ENCODE measurements at regions of chr5 and their contacts with region 1.

Region 1: DNA sequence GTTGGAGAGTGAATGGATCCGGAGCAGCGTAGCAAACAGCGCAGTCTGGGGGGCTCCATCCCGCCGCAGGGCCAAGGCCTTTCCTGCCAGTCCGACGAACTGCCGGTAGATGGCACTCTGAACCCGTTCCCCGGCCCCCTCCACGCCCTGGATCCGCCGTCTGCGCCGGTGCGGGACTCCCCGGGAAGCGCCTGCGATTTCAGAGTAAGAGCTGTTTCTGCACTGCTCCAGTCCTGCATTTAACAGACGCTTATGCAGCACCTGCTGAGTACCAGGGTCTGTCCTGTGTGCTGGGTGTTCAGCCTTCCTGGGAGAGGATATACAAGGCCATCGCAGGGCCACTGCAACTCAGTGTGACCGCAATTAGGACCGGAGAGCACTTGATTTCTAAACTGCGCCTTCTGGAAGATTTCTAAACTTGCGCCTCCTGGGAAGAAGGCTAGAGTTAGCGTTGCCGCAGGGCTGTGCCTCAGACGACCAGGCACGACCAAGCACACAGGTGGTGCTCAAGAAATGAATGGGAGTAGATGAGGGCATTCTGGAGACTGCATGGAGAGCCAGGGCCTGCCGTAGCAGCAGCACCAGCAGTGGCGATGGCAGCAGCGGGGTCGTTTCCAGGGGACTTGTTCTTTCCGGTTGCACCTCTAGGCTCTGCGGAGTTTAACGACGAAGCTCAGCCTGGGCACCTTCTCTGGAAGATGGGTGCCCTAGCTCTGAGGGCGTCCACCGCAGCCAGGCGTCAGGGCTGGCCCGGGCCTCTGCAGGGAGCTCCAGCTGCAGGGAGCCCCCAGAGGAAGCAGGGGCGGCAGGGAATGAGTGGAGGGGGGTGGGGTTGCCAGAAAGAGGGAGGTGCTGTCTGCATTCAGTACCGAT is 14.3 kb upstream of the TIFAB start:
- DNase-seq: peak; percentile 94
- H3K4me3 Mint-ChIP-seq: peak overlapping the region; percentile 61
- H3K27ac Mint-ChIP-seq: no peak overlapping the region
- H3K4me1 Mint-ChIP-seq: peaks cover 7% of the 10 kb centered on the region
- H3K27me3 Mint-ChIP-seq: peaks cover 38% of the 10 kb centered on the region

Region 2: DNA sequence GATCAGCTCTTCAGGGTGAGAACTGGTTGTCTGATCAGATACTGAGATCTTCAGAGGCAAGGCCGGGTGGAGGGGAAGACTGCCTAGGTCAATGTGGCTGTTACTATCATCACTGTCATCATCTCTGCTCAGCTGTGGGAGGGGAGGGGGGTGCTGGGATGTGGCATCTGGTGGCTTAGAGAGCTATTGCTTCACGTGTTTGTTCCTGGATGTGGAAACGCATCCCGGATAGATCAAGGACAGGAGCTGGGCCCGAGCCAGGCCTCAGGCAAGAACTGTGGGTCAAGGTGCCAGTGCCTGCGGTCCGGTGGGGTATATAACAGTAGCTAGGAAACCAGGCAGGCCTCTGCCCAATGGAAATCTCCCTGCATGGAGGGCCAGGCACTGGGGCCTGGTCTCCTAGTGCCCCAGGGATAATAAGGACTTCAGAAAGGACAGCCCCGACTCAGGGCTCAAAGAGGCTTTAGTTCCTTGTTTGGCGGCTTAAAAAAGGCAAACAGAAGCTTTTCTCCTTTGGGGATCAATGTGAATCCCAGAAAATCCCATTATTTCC is 16.0 kb after region 1 on chr5:
- intact Hi-C with region 1: no loop called
- DNase-seq: no peak
- H3K4me3 Mint-ChIP-seq: no peak overlapping the region
- H3K27ac Mint-ChIP-seq: no peak overlapping the region
- H3K4me1 Mint-ChIP-seq: no peaks in the 10 kb centered on the region
- H3K27me3 Mint-ChIP-seq: peaks cover 30% of the 10 kb centered on the region

Region 3: DNA sequence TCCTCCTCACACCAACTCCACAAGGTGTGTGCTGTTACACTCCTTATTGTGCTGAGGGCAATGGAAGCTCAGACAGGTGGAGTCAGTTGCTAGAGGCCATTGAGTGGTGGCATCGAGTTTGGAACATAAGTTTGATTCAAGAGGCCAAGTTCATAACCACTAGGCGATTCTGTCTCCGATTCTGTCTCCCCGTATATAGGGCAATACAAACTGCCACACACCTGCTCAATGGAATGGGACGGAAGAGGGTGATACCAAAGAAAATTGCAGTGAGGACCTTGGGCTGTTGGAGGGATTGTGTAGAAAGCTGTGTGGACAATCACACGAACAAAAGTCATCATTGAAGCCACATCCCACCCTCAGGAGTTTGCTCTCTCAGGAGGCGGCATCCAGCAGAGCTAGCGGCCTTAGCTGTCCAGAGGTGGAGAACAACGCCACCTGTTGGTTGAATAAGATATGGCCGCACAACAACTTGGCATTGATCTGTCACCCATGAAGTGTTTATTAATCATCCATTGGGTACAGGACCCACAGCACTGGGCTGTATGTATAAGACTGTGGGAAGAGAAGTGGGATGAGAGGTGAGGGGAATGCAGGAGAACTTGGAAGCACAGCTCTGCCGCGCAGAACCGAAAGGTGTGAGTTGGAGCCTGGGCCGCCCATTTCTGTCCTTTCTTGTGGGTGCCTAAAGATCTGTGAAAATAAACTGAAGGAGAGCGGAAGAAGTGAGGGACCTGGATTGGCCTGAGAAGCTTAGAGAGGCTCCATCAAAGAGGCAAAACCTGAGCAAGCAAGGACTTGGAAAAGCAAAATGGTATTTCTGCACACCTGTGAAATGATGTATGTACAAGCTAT is 85.4 kb after region 1 on chr5:
- intact Hi-C with region 1: loop called (anchors 1 kb)
- DNase-seq: peak; percentile 88
- H3K4me3 Mint-ChIP-seq: no peak overlapping the region
- H3K27ac Mint-ChIP-seq: no peak overlapping the region
- H3K4me1 Mint-ChIP-seq: no peaks in the 10 kb centered on the region
- H3K27me3 Mint-ChIP-seq: peaks cover 57% of the 10 kb centered on the region

Region 4: GRCh38 chr5:135565725-135566421 is 99.5 kb after region 1 on chr5:
- intact Hi-C with region 1: loop called (anchors 5 kb)
- DNase-seq: peak; percentile 91
- H3K4me3 Mint-ChIP-seq: no peak overlapping the region
- H3K27ac Mint-ChIP-seq: no peak overlapping the region
- H3K4me1 Mint-ChIP-seq: peaks cover 5% of the 10 kb centered on the region
- H3K27me3 Mint-ChIP-seq: peaks cover 10% of the 10 kb centered on the region

Measured in activated CD4-positive, alpha-beta T cell treated with anti-CD3 and anti-CD28 coated beads, Interleukin-2, amount 10 ng/mL, durations not matched to agents 24 days and 14 days (primary cell).